ENCODE measurements at regions of chr20 and their contacts with region 1.

Region 1: GRCh38 chr20:36861875-36862801 is 13.8 kb upstream of the TLDC2 start:
- DNase-seq: no peak
- H3K4me3 Mint-ChIP-seq: peak overlapping the region; percentile 22
- H3K27ac Mint-ChIP-seq: peak overlapping the region; percentile 39
- H3K4me1 Mint-ChIP-seq: peaks cover 14% of the 10 kb centered on the region
- H3K27me3 Mint-ChIP-seq: peaks cover 31% of the 10 kb centered on the region

Region 2: GRCh38 chr20:36773597-36774390 is 88.3 kb before region 1 on chr20 and contains the start of gene DSN1:
- intact Hi-C with region 1: loop called (anchors 5 kb)
- DNase-seq: peak; percentile 100
- H3K4me3 Mint-ChIP-seq: peak within 1 kb of the TSS; percentile 87
- H3K27ac Mint-ChIP-seq: peak within 1 kb of the TSS; percentile 94
- H3K4me1 Mint-ChIP-seq: peaks cover 36% of the 10 kb centered on the region
- H3K27me3 Mint-ChIP-seq: peaks cover 2% of the 10 kb centered on the region
- total RNA-seq, gene DSN1: 23.8 and 24.5 TPM in 2 replicates

Region 3: GRCh38 chr20:36815454-36816091 is 46.6 kb before region 1 on chr20:
- intact Hi-C with region 1: no loop called
- DNase-seq: no peak
- H3K4me3 Mint-ChIP-seq: no peak overlapping the region
- H3K27ac Mint-ChIP-seq: no peak overlapping the region
- H3K4me1 Mint-ChIP-seq: peaks cover 2% of the 10 kb centered on the region
- H3K27me3 Mint-ChIP-seq: peaks cover 6% of the 10 kb centered on the region

Region 4: DNA sequence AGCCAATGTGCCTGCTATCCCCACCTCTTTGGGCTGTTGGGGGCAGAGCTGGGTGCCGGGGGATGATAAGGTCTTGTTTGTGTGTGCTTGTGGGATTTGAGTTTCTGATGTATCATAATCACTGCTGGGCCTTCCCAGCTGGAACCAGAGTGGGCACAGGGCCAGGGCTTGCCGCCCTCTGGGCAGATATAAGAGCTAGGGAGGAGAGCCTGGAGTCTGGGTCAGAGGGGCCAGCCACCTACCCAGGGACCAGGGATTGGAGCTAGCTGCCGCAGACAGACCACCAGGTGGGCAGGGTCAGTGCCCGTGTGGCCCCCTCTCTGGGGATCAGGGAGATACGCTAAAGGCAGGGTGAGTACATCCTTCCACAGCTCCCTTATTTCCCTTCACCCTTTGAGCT is 10.7 kb after region 1 on chr20:
- intact Hi-C with region 1: no loop called
- DNase-seq: no peak
- H3K4me3 Mint-ChIP-seq: no peak overlapping the region
- H3K27ac Mint-ChIP-seq: no peak overlapping the region
- H3K4me1 Mint-ChIP-seq: no peaks in the 10 kb centered on the region
- H3K27me3 Mint-ChIP-seq: no peaks in the 10 kb centered on the region